ENCODE measurements at regions of chr6 and their contacts with region 1.

Region 1: DNA sequence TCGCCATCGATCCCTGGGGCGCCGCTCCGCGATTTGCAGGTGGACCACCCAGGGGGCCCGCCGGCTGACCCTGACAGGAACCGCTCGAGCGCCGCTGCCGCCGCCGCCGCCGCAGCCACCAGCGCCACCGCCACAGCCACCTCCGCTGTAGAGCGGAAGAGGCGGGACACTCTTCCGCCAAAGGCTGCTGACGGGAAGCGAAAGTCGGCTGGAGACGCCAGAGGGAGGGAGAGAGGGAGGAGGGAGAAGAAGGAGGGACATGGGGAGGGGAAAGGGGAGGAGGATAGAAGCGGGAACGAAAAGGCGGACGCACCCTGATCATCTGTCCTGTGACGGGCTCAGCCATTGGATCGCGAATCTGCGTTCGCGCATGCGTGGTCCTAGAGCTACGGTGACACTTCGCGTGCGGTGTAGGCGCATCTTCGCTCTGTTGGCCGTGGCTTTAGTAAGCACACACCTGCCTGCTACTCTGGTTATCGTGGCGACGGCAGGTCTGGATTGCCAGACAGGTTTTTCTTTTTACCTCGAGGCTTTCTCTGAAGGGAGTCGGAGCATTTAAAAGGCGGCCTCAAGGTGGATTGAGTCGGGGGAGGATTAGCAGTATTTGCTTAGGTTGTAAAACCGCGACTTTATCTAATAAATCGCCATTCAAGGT is at the start of gene TMEM30A:
- DNase-seq: peak; percentile 98
- H3K4me3 Mint-ChIP-seq: no peak within 1 kb of the TSS
- H3K27ac Mint-ChIP-seq: no peak within 1 kb of the TSS
- H3K4me1 Mint-ChIP-seq: peaks cover 50% of the 10 kb centered on the region
- H3K27me3 Mint-ChIP-seq: no peaks in the 10 kb centered on the region
- total RNA-seq, gene TMEM30A: 46.6 to 50.1 TPM

Region 2: GRCh38 chr6:73461537-73462350 is 1823.0 kb before region 1 on chr6 and contains the start of gene MTO1:
- CTCF ChIA-PET with region 1: no interaction called
- POLR2A ChIA-PET with region 1: no interaction called
- intact Hi-C with region 1: loop called (anchors 2 kb)
- DNase-seq: peak; percentile 91
- H3K4me3 Mint-ChIP-seq: peak within 1 kb of the TSS; percentile 97
- H3K27ac Mint-ChIP-seq: peak within 1 kb of the TSS; percentile 97
- H3K4me1 Mint-ChIP-seq: peaks cover 40% of the 10 kb centered on the region
- H3K27me3 Mint-ChIP-seq: no peaks in the 10 kb centered on the region
- total RNA-seq, gene MTO1: 40.7 to 47.7 TPM

Region 3: GRCh38 chr6:73585566-73586415 is 1699.0 kb before region 1 on chr6:
- CTCF ChIA-PET with region 1: no interaction called
- POLR2A ChIA-PET with region 1: no interaction called
- intact Hi-C with region 1: loop called (anchors 5 kb)
- DNase-seq: peak; percentile 45
- H3K4me3 Mint-ChIP-seq: peak overlapping the region; percentile 75
- H3K27ac Mint-ChIP-seq: peak overlapping the region; percentile 95
- H3K4me1 Mint-ChIP-seq: peaks cover 24% of the 10 kb centered on the region
- H3K27me3 Mint-ChIP-seq: peaks cover 2% of the 10 kb centered on the region

Region 4: DNA sequence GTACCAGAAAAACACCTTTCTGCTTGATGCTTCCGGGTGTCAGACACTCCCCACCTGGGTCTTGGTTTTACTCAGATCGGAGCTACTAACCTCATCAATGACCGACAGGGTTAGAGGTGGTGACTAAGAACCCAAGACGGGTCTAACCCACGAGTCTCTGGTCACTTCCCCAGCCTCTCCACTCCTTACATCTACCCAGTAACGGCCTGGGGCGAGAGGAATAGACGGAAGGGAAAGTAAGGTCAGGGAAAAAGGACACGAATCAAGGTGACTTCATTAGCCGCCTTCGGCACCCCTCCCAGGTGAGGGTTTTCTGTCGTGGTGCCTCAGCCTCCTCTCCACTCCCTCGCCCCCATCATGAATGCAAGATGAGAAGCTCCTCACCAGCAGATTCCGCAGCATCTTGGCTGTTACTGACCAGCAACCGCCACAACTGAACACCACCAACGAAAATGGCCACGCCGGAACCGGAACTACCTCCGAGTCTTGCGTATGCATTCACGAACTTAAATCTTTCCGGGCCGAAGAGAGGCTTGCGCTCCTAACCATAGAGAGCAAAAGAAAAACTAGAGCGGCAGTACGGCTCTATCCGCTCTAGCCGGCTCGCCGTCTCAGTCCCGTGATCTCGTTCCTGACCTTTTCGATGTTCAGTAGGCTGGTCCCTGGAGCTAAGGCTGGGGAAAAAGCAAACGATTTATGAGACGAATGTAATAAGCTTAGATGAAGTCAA is 41.3 kb before region 1 on chr6 and contains the start of gene COX7A2:
- CTCF ChIA-PET with region 1: no interaction called
- POLR2A ChIA-PET with region 1: interaction called, 17 read pairs
- intact Hi-C with region 1: loop called (anchors 1 kb)
- DNase-seq: peak; percentile 92
- H3K4me3 Mint-ChIP-seq: peak within 1 kb of the TSS; percentile 100
- H3K27ac Mint-ChIP-seq: peak within 1 kb of the TSS; percentile 100
- H3K4me1 Mint-ChIP-seq: peaks cover 26% of the 10 kb centered on the region
- H3K27me3 Mint-ChIP-seq: peaks cover 9% of the 10 kb centered on the region
- total RNA-seq, gene COX7A2: 564 to 566 TPM

Region 5: GRCh38 chr6:75334266-75335040 is 49.7 kb after region 1 on chr6:
- CTCF ChIA-PET with region 1: no interaction called
- POLR2A ChIA-PET with region 1: no interaction called
- intact Hi-C with region 1: no loop called
- DNase-seq: no peak
- H3K4me3 Mint-ChIP-seq: no peak overlapping the region
- H3K27ac Mint-ChIP-seq: no peak overlapping the region
- H3K4me1 Mint-ChIP-seq: no peaks in the 10 kb centered on the region
- H3K27me3 Mint-ChIP-seq: peaks cover 3% of the 10 kb centered on the region

Region 6: DNA sequence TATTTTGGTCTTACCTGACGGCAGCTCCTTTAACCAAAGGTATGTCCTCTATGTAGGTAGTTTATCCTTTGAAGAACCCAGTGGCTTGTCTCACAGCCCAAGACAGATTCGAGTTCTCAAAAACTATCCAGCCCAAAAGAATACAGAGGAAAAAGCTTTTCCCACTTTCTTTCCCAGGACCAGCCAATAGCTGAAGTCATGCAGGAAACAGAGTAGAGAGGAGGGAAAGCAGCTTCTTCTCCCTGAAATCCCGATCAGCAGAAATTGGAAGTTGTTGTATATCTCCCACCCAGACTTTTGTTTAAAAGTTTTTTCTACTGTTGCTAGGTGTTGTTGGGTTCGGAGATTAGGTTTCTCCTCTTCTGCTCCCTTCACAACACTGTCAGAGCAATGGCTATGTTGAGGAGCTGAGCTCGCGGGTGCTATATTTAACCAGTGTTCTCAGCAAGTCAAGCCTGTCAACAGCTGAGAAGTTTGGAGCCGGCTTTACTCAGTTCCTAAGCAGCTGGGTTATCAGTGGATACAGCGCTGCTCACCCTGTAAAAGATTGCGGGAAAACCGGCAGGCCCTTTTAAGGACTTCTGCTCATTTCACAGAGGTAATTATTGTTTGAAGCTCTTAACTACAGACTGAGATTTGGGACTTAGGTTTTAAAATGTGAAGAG is 208.8 kb after region 1 on chr6 and contains the start of gene FILIP1:
- CTCF ChIA-PET with region 1: no interaction called
- POLR2A ChIA-PET with region 1: no interaction called
- intact Hi-C with region 1: loop called (anchors 1 kb)
- DNase-seq: no peak
- H3K4me3 Mint-ChIP-seq: no peak within 1 kb of the TSS
- H3K27ac Mint-ChIP-seq: no peak within 1 kb of the TSS
- H3K4me1 Mint-ChIP-seq: peaks cover 11% of the 10 kb centered on the region
- H3K27me3 Mint-ChIP-seq: peaks cover 23% of the 10 kb centered on the region
- total RNA-seq, gene FILIP1: not detected

Region 7: GRCh38 chr6:75830959-75831885 is 546.5 kb after region 1 on chr6:
- CTCF ChIA-PET with region 1: no interaction called
- POLR2A ChIA-PET with region 1: no interaction called
- intact Hi-C with region 1: loop called (anchors 5 kb)
- DNase-seq: peak; percentile 54
- H3K4me3 Mint-ChIP-seq: no peak overlapping the region
- H3K27ac Mint-ChIP-seq: peak overlapping the region; percentile 39
- H3K4me1 Mint-ChIP-seq: peaks cover 12% of the 10 kb centered on the region
- H3K27me3 Mint-ChIP-seq: no peaks in the 10 kb centered on the region